Thyroid gland (tissue), 4 donors: ENCODE measurements at regions of chrX and their contacts with region 1.

Region 1: DNA sequence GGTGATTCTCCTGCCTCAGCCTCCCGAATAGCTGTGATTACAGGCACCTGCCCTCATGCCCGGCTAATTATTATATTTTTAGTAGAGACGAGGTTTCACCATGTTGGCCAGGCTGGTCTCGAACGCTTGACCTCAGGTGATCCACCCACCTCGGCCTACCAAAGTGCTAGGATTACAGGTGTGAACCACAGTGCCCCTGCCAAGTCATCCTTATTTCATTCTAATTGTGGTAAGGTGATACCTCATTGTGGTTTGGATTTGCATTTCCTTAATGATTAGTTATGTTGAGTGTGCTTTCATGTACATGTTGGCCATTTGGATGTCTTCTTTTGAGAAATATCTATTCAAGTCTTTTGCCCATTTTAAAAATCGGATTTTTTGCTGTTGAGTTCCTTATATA is 93.0 kb downstream of the USP9X start:
- DNase-seq: no peak
- H3K4me3 ChIP-seq: no peak overlapping the region
- H3K27ac ChIP-seq: no peak overlapping the region
- H3K4me1 ChIP-seq: no peaks in the 10 kb centered on the region
- H3K27me3 ChIP-seq: no peaks in the 10 kb centered on the region
- CTCF ChIP-seq: no peak
- POLR2A ChIP-seq: no peak

Region 2: DNA sequence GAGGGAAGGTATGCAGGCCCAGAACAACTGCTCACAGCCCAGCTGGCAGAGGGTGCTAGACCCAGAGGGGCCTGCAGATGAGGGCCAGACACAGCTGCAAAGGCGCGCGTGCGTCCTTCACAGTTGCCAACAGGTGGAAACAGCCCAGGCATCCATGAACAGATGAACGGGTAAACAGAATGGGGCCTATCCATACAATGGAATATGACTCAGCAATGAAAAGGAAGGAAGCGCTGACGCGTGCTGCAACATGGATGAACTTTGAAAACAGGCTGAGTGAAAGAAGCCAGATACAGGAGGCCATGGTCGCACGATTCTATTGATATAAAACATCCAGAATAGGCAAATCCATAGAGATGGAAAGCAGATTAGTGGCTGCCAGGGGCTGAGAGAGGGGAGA is 72.7 kb after region 1 on chrX:
- intact Hi-C with region 1: loop called (anchors 5 kb)
- DNase-seq: no peak
- H3K4me3 ChIP-seq: no peak overlapping the region
- H3K27ac ChIP-seq: no peak overlapping the region
- H3K4me1 ChIP-seq: peaks cover 0 to 7% of the 10 kb centered on the region in 2 donors
- H3K27me3 ChIP-seq: no peaks in the 10 kb centered on the region
- CTCF ChIP-seq: no peak
- POLR2A ChIP-seq: no peak